GM13976 (cell line): ENCODE measurements at regions of chr3 and their contacts with region 1.

Region 1: DNA sequence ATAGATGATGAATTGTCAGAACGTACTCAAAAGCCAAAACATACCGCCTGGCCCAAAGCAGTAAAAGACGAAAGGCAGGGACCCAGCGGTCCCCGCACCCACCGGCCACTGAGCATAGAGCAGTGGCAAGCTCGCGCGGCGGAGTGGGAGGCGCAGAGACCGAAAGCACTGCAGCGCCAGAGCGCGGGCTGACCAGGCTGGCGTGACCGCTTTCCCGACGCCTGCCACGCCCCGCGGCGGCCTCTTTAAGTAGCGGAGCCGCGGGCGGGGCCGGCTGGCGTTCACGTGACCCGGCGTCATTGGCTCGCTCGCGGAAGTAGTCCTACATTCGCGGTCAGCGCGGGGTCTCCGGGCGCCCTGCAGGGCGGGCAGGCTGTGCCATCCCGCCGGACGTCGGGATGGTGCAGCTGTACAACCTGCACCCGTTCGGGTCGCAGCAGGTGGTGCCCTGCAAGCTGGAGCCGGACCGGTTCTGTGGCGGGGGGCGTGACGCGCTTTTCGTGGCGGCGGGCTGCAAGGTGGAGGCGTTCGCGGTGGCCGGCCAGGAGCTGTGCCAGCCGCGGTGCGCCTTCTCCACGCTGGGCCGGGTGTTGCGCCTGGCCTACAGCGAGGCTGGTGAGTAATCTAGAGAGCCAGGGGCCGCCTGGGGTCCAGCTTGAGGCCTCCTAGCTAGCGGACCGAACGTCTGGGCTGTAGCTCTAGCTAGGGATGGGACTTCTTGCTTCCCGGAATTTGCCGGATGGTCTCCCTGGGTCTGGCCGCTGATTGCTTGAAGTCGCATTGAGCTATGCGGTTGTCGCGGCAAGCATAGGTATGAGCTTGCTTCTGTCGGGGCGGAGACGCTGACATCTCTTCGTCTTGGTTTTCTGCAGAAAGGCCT is at the start of gene HPS3:
- DNase-seq: peak; percentile 95
- CTCF ChIP-seq: no peak

Region 2: DNA sequence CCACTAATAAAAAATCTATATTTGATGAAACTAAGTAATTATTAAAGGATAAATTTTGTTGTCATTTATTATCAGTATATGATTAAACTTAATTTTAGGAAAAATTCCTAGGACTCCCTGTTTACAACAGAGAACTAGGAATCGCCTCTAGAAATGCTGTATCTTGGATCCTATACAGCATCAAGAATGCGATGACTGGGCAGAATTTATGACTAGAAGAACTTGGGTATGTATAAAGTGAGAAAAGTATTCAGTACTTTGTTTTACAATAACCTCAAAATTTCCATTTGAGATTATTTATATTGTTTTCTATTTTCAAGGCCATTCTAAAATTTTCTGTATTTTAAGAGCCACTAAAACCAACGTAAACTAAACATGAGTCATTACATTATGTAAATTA is 514.2 kb before region 1 on chr3:
- in situ Hi-C with region 1: no loop called
- DNase-seq: no peak
- CTCF ChIP-seq: no peak

Region 3: DNA sequence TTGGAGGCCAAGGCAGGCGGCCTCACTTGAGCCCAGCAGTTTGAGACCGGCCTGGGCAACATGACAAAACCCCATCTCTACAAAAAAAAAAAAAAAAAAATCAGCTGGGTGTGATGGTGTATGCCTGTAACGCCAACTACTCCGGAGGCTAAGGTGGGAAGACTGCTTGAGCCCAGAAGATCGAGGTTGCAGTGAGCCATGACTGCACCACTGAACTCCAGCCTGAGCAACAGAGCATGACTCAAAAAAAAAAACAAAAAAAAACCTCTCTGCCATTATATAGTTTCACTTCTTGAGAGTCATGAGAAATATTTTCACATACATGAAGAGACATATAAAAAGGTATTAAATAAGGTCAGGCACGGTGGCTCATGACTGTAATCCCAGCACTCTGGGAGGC is 138.0 kb after region 1 on chr3:
- in situ Hi-C with region 1: loop called (anchors 10 kb)
- DNase-seq: no peak
- CTCF ChIP-seq: no peak

Region 4: DNA sequence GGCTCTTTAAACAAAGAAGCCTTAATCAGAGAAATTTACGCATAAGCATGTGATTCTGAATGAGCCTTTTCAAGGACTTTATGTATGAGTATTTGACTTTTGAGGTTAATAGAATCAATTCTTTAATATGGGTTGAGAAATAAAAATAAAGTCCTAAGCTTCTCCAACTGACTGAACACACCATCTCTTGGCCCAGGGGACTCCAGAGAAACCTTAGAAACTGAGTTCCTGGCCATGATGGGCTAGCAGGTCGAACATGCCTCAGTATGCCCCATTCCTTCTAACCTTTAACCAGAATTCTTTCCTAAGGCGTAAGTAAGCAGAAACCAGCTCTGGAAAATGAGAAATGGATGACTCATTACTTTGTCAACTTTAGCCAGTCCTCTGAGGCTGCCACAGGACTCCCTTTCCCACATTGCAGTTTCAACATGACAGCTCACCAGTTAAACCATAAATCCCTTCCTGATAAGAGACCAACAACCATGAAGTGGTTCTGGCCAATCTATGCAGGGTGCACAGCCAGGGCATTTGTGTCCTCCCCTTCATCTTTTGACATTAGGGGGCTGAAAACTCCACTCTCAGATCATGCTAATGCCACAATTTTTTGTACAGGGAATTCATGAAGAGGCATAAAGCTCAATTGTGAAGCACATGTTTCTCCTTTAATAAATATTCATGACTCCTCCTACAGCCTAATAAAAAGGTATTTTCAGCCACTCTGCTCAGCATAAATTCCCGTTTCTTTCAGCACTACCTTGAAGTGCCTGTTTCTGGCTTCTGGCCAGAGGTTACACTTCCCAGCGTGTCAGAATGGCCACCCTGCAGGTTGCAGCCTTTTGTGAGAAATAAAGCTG is 170.6 kb after region 1 on chr3:
- in situ Hi-C with region 1: no loop called
- DNase-seq: no peak
- CTCF ChIP-seq: no peak

Region 5: DNA sequence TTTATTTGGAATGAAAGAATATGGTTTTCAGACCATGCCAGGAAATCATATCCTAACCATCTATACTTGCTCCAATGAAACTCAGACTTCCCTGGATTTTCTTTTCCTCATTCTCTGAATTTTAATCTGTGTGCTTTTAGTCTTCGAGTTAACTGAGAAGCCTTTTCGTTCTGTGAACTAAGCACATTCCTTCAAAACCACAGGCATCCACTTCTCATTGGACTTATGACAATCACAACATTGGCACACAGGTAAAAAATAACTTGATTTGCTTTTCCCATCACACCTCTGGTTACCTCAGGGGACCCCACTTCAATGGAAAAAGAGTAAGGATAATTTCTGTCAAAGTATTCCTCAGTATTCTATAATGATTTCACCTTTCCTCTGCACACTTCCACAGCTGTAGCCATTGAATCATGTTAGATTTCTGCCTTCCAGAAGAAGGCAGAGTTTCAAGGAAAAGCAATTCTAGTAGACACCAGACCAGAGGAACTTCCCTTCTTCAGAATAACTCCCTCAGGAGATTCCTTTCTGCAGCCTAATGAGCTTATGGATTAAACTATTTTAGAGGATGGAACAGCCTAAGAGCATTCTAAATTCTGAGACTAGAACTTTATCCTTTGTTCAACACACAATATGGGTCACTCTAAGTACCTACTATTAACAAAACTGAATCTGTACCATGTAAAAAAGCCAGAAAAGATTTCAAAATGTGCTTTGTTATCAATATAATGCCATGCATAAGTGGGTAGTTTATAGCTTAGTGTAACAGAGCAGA is 606.8 kb after region 1 on chr3:
- in situ Hi-C with region 1: no loop called
- DNase-seq: no peak
- CTCF ChIP-seq: no peak